OCI-LY7 (cell line): ENCODE measurements at regions of chr6 and their contacts with region 1.

Region 1: DNA sequence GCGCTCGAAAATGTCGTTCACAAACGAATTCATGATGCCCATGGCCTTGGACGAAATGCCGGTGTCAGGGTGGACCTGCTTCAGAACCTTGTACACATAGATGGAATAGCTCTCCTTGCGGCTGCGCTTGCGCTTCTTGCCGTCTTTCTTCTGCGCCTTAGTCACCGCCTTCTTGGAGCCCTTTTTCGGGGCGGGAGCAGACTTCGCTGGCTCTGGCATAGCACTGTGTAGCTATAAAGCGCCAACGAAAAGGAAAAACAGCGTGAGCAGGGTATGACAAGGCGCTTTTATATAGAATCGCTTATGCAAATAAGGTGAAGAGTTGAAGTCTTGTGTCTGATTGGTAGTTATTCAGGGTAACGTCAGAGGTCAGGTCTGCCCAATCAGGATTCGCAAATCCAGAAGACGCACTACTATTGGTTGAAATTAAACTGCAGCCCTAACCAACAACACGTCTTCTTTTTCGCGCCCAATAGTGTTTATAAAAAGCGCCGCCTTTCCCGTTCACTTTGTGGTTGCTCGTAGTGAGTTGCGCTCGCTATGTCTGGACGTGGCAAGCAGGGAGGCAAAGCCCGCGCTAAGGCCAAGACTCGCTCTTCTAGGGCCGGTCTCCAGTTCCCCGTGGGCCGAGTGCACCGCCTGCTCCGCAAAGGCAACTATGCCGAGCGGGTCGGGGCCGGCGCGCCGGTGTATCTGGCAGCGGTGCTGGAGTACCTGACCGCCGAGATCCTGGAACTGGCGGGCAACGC is 114.8 kb upstream of the PRSS16 start:
- DNase-seq: peak; percentile 98
- H3K4me3 ChIP-seq: peak overlapping the region; percentile 79
- H3K27ac ChIP-seq: peak overlapping the region; percentile 99
- H3K4me1 ChIP-seq: peaks cover 74% of the 10 kb centered on the region
- CTCF ChIP-seq: no peak

Region 2: DNA sequence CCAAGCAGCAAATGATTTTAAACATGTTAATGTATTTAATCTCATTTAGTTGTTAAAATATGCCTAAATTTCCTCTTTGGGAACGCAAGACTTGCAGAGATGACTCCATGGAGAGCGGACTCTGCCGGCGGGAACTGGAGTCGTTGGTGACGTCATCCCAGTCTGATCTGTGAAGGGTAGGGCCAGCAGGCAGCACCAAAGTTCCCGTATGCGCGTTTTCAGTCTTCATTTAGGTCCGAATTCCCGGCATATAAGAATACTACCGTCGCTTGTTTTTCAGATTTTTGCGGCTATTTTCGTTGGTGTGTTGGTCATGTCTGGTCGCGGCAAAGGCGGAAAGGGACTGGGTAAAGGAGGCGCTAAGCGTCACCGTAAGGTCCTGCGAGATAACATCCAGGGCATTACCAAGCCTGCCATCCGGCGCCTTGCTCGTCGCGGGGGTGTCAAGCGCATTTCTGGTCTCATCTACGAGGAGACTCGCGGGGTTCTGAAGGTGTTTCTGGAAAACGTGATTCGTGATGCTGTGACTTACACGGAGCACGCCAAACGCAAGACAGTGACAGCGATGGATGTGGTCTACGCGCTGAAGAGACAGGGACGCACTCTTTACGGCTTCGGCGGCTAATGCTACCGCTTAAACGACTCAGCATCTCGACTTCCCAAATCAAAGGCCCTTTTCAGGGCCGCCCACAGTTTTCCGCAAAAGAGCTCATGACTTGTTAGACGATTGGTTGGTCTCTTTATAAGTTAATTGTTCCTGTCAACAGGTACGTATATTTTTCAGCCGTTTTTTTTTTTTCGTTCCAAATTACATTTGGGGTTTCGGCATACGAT is 928.2 kb before region 1 on chr6:
- CTCF ChIA-PET with region 1: no interaction called
- POLR2A ChIA-PET with region 1: no interaction called
- intact Hi-C with region 1: loop called (anchors 2 kb)
- DNase-seq: peak; percentile 98
- H3K4me3 ChIP-seq: peak overlapping the region; percentile 79
- H3K27ac ChIP-seq: peak overlapping the region; percentile 93
- H3K4me1 ChIP-seq: peaks cover 63% of the 10 kb centered on the region
- CTCF ChIP-seq: peak; percentile 61

Region 3: DNA sequence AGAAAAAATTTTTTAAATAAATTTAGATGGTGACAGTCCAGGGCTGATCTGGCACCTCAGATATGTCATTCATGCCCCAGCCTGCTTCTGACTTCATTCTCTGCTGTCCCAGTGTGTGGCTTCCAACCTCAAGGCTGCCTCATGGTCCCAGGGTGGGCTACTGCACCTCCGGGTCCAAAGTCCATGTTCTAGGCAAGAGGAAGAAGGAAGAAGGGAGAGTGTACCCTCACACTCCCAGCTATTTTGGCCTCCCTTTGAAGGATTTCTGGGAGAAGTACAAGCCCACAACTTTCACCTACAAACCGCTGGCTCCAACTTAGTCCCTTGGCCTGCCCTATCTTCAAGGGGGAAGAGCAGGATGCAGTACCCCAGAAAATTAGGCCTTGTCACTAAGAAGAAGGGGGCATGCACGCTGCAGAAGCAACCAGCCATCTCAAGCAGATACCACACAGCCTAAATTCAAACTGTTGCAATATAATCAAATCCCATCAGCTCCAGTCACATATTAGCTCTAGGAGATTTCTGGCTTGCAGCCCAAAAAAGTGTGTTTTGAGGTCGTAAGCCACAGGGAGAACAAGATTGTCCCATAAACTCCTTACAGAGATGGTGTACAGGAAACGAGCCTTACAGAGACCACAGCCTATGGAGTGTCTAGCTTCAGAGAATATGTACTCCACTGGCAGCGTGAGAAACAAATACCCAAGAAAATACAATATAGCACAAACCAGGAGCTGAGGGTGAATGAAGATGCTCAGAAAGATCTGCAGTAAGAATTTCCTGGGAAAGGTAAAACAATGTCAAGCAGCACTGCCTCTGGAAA is 768.6 kb before region 1 on chr6:
- CTCF ChIA-PET with region 1: no interaction called
- POLR2A ChIA-PET with region 1: interaction called, 3 read pairs
- intact Hi-C with region 1: loop called (anchors 5 kb)
- DNase-seq: peak; percentile 52
- H3K4me3 ChIP-seq: peak overlapping the region; percentile 77
- H3K27ac ChIP-seq: peak overlapping the region; percentile 96
- H3K4me1 ChIP-seq: peaks cover 70% of the 10 kb centered on the region
- CTCF ChIP-seq: no peak

Region 4: DNA sequence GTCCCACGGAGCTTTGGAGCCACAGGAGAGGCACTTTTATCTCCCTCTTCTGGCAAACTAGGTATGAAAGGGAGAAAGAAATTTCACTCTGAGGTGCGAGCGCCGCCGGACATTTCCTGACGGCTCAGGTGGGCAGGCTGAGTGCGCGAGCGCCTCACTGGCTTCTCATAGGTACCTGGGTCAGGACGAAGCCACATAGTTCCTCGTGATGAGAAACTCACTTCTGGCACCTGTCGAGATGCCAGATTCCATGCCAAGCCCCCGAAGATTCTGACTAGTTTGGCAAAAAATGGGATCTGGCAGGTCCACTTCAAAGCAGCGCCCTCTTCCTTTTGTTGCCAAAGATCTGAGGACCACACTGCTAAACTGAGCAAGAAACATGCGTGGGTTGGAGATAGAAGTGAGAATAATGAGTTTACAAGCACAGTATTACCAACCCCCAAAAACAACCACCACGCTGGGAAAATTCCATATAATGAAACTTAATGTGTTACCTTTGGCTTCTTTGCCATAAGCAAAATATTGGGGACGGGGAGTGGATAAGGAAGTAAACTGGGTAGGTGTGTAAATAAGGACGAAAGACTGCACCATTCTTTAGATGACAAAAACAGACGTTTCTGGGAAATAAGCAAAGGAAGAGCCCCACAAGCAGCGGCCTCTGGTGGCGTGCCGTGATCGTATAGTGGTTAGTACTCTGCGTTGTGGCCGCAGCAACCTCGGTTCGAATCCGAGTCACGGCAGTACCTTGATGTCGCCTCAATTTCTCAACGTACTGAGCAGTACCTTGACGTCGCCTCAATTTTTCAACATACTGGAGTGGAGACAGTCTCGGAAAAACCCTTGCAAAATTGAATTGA is 25.0 kb after region 1 on chr6:
- CTCF ChIA-PET with region 1: no interaction called
- POLR2A ChIA-PET with region 1: interaction called, 18 read pairs
- intact Hi-C with region 1: no loop called
- DNase-seq: peak; percentile 61
- H3K4me3 ChIP-seq: peak overlapping the region; percentile 56
- H3K27ac ChIP-seq: peak overlapping the region; percentile 28
- H3K4me1 ChIP-seq: peaks cover 45% of the 10 kb centered on the region
- CTCF ChIP-seq: peak; percentile 55

Region 5: DNA sequence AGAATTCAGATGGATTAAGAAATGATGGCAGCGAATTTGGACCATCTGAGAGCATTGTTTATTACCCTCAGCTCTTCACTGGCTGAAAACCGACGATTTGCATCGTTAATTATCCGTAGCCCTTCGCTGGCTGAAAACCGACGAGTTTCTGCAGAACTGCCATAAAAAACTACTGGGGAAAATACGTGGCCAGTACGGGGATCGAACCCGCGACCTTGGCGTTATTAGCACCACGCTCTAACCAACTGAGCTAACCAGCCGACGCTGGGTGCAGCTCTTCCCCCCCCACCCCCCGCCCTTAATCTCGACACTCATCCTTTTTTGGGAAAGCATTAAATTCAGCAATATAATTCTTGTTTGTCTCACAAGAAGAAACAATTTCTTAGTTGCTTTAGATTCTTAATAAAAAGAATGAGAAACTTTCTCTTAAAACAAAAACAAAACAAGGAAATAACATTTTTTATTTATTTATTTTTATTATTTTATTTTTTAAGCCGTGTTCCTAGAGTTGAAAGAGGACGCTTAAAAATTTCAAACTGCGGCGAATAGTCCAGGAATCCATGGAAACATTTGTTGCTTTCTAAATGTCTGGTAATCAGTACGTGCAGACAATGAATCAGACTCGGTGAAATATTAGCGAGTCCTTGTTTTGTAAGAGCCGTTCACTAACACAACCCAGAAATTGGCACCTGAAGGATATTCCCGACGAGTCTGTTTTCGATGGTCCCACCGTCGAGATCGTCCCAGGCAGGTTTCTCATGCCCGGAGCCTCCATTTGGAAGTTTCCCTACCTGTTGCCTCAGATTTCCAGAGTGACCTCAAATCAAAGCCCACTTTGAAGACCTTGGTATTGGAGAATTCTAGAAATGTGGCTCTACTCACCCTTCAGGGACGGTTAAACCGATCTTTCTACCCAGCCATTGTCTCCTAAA is 142.6 kb after region 1 on chr6:
- CTCF ChIA-PET with region 1: no interaction called
- POLR2A ChIA-PET with region 1: no interaction called
- intact Hi-C with region 1: no loop called
- DNase-seq: no peak
- H3K4me3 ChIP-seq: no peak overlapping the region
- H3K27ac ChIP-seq: no peak overlapping the region
- H3K4me1 ChIP-seq: no peaks in the 10 kb centered on the region
- CTCF ChIP-seq: no peak

Region 6: GRCh38 chr6:28880894-28881780 is 1748.4 kb after region 1 on chr6:
- CTCF ChIA-PET with region 1: no interaction called
- POLR2A ChIA-PET with region 1: no interaction called
- intact Hi-C with region 1: loop called (anchors 10 kb)
- DNase-seq: peak; percentile 72
- H3K4me3 ChIP-seq: peak overlapping the region; percentile 50
- H3K27ac ChIP-seq: peak overlapping the region; percentile 61
- H3K4me1 ChIP-seq: peaks cover 64% of the 10 kb centered on the region
- CTCF ChIP-seq: no peak